Endothelial cell of umbilical vein (primary cell): ENCODE measurements at regions of chr4 and their contacts with region 1.

Region 1: DNA sequence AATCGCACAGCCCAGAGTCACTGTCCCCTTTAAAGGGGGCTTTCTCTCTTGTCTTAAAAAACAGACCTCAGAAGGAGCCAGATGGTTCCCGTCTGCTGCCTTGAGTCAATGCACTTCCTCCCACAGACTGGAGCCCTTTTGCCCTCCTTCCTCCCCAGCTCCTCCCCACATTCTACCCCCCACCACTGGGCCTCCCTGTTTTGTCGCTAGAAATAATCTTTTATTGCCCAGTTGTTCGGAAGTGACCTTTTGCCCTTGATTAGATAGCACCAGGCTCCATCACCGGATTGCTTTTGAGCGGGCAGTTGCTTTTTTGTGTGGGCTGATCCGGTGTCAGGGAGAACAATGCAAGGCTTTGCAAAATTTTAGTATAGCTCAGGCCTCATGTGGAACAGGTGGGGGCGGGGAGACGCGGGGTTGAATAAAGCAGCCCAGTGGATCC is 47.7 kb downstream of the SPRY1 start:
- DNase-seq: peak; percentile 75
- H3K4me3 ChIP-seq: no peak overlapping the region
- H3K27ac ChIP-seq: peak overlapping the region; percentile 45
- H3K4me1 ChIP-seq: peaks cover 22% of the 10 kb centered on the region
- H3K27me3 ChIP-seq: no peaks in the 10 kb centered on the region
- CTCF ChIP-seq: no peak
- POLR2A ChIP-seq: no peak

Region 2: GRCh38 chr4:123361195-123361861 is 83.0 kb before region 1 on chr4:
- CTCF ChIA-PET with region 1: no interaction called
- POLR2A ChIA-PET with region 1: no interaction called
- dilution Hi-C with region 1: no loop called
- intact Hi-C with region 1: loop called (anchors 1 kb)
- DNase-seq: peak; percentile 93
- H3K4me3 ChIP-seq: no peak overlapping the region
- H3K27ac ChIP-seq: peak overlapping the region; percentile 98
- H3K4me1 ChIP-seq: peaks cover 24% of the 10 kb centered on the region
- H3K27me3 ChIP-seq: no peaks in the 10 kb centered on the region
- CTCF ChIP-seq: no peak
- POLR2A ChIP-seq: no peak

Region 3: GRCh38 chr4:123418351-123418931 is 25.9 kb before region 1 on chr4:
- CTCF ChIA-PET with region 1: interaction called, 3 read pairs
- POLR2A ChIA-PET with region 1: no interaction called
- dilution Hi-C with region 1: no loop called
- intact Hi-C with region 1: loop called (anchors 2 kb)
- DNase-seq: peak; percentile 82
- H3K4me3 ChIP-seq: peak overlapping the region in 1 of 3 experiments; percentile 34
- H3K27ac ChIP-seq: peak overlapping the region; percentile 58
- H3K4me1 ChIP-seq: peaks cover 45% of the 10 kb centered on the region
- H3K27me3 ChIP-seq: no peaks in the 10 kb centered on the region
- CTCF ChIP-seq: no peak
- POLR2A ChIP-seq: no peak

Region 4: DNA sequence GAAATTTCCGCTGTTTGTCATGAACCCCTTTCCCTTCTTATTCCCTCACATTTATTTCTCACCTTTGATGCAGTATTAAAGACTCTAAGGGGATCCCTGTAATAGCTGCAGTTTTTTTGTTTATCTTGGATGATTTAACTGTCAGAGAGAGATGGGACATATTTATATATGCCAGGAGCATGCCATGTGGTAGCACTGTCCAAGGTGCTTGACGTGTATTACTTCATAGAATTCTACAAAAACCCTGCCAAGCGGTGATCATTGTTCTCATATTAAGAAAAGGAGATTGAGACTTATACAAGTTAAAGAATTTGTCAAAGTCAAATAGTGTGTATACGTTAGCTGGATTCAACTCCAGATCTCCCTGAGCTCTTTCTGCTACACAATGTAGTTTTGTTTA is 30.5 kb after region 1 on chr4:
- CTCF ChIA-PET with region 1: no interaction called
- POLR2A ChIA-PET with region 1: no interaction called
- dilution Hi-C with region 1: no loop called
- intact Hi-C with region 1: loop called (anchors 2 kb)
- DNase-seq: no peak
- H3K4me3 ChIP-seq: no peak overlapping the region
- H3K27ac ChIP-seq: no peak overlapping the region
- H3K4me1 ChIP-seq: peaks cover 3% of the 10 kb centered on the region
- H3K27me3 ChIP-seq: no peaks in the 10 kb centered on the region
- CTCF ChIP-seq: no peak
- POLR2A ChIP-seq: no peak

Region 5: GRCh38 chr4:123505095-123506010 is 61.0 kb after region 1 on chr4:
- CTCF ChIA-PET with region 1: no interaction called
- POLR2A ChIA-PET with region 1: no interaction called
- dilution Hi-C with region 1: no loop called
- intact Hi-C with region 1: loop called (anchors 1 kb)
- DNase-seq: peak; percentile 74
- H3K4me3 ChIP-seq: peak overlapping the region; percentile 35 to 72 (median 61)
- H3K27ac ChIP-seq: peak overlapping the region; percentile 65
- H3K4me1 ChIP-seq: peaks cover 16% of the 10 kb centered on the region
- H3K27me3 ChIP-seq: no peaks in the 10 kb centered on the region
- CTCF ChIP-seq: no peak
- POLR2A ChIP-seq: no peak